Endothelial cell of umbilical vein (primary cell): ENCODE measurements at regions of chr20 and their contacts with region 1.

Region 1: GRCh38 chr20:17682103-17682888 is at the start of gene RRBP1:
- DNase-seq: peak; percentile 98
- H3K4me3 ChIP-seq: peak within 1 kb of the TSS; percentile 44 to 90 (median 71)
- H3K27ac ChIP-seq: peak within 1 kb of the TSS; percentile 76
- H3K4me1 ChIP-seq: peaks cover 13% of the 10 kb centered on the region
- H3K27me3 ChIP-seq: peaks cover 20 to 28% of the 10 kb centered on the region in 2 experiments
- CTCF ChIP-seq: peak; percentile 70 to 72
- POLR2A ChIP-seq: peak; percentile 96
- total RNA-seq, gene RRBP1: 201 and 236 TPM in 2 replicates

Region 2: GRCh38 chr20:17504898-17505635 is 177.2 kb before region 1 on chr20:
- CTCF ChIA-PET with region 1: interaction called, 6 read pairs
- POLR2A ChIA-PET with region 1: no interaction called
- dilution Hi-C with region 1: no loop called
- intact Hi-C with region 1: loop called (anchors 1 kb)
- DNase-seq: peak; percentile 72
- H3K4me3 ChIP-seq: peak overlapping the region; percentile 31 to 74 (median 58)
- H3K27ac ChIP-seq: peak overlapping the region; percentile 9
- H3K4me1 ChIP-seq: peaks cover 13% of the 10 kb centered on the region
- H3K27me3 ChIP-seq: no peaks in the 10 kb centered on the region
- CTCF ChIP-seq: peak; percentile 39 to 41
- POLR2A ChIP-seq: peak; percentile 61

Region 3: GRCh38 chr20:17558154-17558940 is 123.9 kb before region 1 on chr20:
- CTCF ChIA-PET with region 1: no interaction called
- POLR2A ChIA-PET with region 1: no interaction called
- dilution Hi-C with region 1: no loop called
- intact Hi-C with region 1: no loop called
- DNase-seq: peak; percentile 95
- H3K4me3 ChIP-seq: peak overlapping the region; percentile 2 to 38 (median 4)
- H3K27ac ChIP-seq: peak overlapping the region; percentile 96
- H3K4me1 ChIP-seq: peaks cover 41% of the 10 kb centered on the region
- H3K27me3 ChIP-seq: no peaks in the 10 kb centered on the region
- CTCF ChIP-seq: no peak
- POLR2A ChIP-seq: peak; percentile 89

Region 4: GRCh38 chr20:17654649-17655285 is 27.5 kb before region 1 on chr20:
- CTCF ChIA-PET with region 1: interaction called, 51 read pairs
- POLR2A ChIA-PET with region 1: interaction called, 3 read pairs
- dilution Hi-C with region 1: no loop called
- intact Hi-C with region 1: loop called (anchors 1 kb)
- DNase-seq: peak; percentile 66
- H3K4me3 ChIP-seq: no peak overlapping the region
- H3K27ac ChIP-seq: peak overlapping the region; percentile 29
- H3K4me1 ChIP-seq: peaks cover 5% of the 10 kb centered on the region
- H3K27me3 ChIP-seq: no peaks in the 10 kb centered on the region
- CTCF ChIP-seq: peak; percentile 75 to 78
- POLR2A ChIP-seq: no peak

Region 5: GRCh38 chr20:17786221-17786718 is 104.0 kb after region 1 on chr20:
- CTCF ChIA-PET with region 1: interaction called, 3 read pairs
- POLR2A ChIA-PET with region 1: interaction called, 4 read pairs
- dilution Hi-C with region 1: no loop called
- intact Hi-C with region 1: loop called (anchors 1 kb)
- DNase-seq: peak; percentile 91
- H3K4me3 ChIP-seq: no peak overlapping the region
- H3K27ac ChIP-seq: peak overlapping the region; percentile 62
- H3K4me1 ChIP-seq: peaks cover 6% of the 10 kb centered on the region
- H3K27me3 ChIP-seq: peaks cover 0 to 4% of the 10 kb centered on the region in 2 experiments
- CTCF ChIP-seq: no peak
- POLR2A ChIP-seq: no peak

Region 6: DNA sequence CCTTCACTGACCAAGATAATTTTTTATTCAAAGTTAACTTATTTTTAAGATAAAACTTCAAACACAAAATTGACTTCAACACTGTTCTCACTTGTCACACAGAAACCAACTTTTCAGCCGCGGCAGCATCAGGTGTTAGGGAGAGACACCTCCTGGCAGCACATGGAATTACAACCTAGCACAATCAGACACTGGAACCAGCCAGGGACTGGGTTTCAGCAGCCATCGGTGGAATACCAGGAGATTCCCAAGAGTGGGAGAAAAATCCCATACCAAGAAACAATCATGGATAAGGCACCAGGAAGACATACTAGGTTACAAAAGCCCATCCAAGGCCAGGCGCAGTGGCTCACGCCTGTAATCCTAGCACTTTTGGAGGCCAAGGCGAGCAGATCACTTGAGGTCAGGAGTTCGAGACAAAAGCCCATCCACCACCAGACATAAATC is 216.3 kb after region 1 on chr20:
- CTCF ChIA-PET with region 1: interaction called, 110 read pairs
- POLR2A ChIA-PET with region 1: interaction called, 20 read pairs
- dilution Hi-C with region 1: no loop called
- intact Hi-C with region 1: loop called (anchors 1 kb)
- DNase-seq: peak; percentile 70
- H3K4me3 ChIP-seq: no peak overlapping the region
- H3K27ac ChIP-seq: no peak overlapping the region
- H3K4me1 ChIP-seq: peaks cover 25% of the 10 kb centered on the region
- H3K27me3 ChIP-seq: peaks cover 4 to 5% of the 10 kb centered on the region in 2 experiments
- CTCF ChIP-seq: peak; percentile 81 to 86
- POLR2A ChIP-seq: no peak

Region 7: GRCh38 chr20:18287915-18288748 is 605.8 kb after region 1 on chr20 and contains the start of gene ZNF133:
- CTCF ChIA-PET with region 1: no interaction called
- POLR2A ChIA-PET with region 1: no interaction called
- dilution Hi-C with region 1: no loop called
- intact Hi-C with region 1: loop called (anchors 5 kb)
- DNase-seq: peak; percentile 96
- H3K4me3 ChIP-seq: peak within 1 kb of the TSS; percentile 72 to 92 (median 79)
- H3K27ac ChIP-seq: peak within 1 kb of the TSS; percentile 92
- H3K4me1 ChIP-seq: peaks cover 7% of the 10 kb centered on the region
- H3K27me3 ChIP-seq: peaks cover 0 to 8% of the 10 kb centered on the region in 2 experiments
- CTCF ChIP-seq: peak in 1 of 2 donors; percentile 7
- POLR2A ChIP-seq: peak; percentile 90
- total RNA-seq, gene ZNF133: 11.1 and 12.2 TPM in 2 replicates